ENCODE measurements at regions of chr11 and their contacts with region 1.

Region 1: DNA sequence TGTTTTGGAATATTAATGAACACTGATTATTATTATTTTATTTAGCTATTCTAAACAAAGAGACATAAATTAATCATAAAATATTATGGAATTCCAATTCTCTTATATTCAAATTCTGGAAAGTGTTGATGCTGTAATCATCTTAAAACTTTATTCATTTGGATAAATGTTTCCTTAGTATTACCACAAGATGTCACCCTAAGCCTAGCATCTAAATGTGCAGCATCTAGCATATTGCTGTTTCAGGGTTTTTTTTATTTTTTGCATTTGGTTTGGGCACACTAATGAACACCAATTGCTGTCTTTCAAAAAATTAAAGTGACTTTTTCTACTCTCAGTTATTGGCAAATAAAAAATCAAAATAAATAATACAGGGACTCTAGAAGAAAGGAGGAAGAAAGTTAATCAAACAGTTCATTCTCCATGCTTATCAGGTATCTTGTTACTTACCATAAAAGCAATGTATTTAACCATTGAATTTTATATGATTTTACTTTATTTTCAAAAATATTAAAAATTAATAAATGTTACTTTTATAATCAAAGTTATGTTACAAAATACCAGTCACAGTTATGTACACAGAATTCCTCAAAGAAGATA is 31.8 kb downstream of the DLG2 start:
- DNase-seq: peak; percentile 66
- H3K4me3 ChIP-seq: no peak overlapping the region
- H3K27ac ChIP-seq: no peak overlapping the region
- H3K4me1 ChIP-seq: no peaks in the 10 kb centered on the region
- CTCF ChIP-seq: peak; percentile 90

Region 2: DNA sequence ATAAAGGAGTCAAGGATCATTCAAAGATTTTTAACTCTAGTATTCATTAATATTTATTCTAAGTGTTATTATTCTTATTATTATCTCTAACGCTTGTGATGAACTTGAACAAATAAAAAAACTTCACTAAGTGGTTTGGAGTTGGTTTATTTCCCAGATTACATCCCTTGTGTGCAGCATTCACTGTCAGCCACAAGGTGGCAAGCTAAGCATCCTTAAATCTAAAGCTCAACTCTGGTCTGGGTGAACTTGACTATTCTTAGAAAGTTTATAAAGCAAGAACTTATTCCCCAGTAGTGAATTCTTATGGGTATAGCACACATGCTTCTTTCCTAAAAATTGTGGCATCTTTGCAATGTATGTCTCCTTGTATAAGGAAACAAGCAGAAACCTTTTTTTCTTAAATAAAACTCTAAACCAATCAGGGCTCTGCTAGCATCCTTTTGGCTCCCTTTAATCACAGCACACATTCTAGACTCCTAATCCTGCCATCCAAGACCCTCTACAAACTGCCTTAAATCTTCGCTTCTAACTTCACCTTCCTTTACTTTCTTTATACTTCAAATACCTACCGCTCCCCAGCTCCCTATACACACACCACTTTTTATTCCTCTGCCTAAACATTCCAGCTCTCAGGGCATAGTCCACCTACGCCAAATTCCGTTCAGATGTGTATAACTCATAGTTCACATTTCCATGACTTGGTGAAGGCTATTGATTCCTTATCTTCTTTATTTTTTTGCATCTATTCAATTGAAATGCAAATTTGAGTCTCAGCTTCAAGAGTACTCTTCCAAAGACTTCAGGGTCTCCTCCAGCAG is 1037.1 kb before region 1 on chr11:
- CTCF ChIA-PET with region 1: no interaction called
- POLR2A ChIA-PET with region 1: no interaction called
- intact Hi-C with region 1: loop called (anchors 2 kb)
- DNase-seq: peak; percentile 74
- H3K4me3 ChIP-seq: no peak overlapping the region
- H3K27ac ChIP-seq: no peak overlapping the region
- H3K4me1 ChIP-seq: no peaks in the 10 kb centered on the region
- CTCF ChIP-seq: peak; percentile 88

Region 3: GRCh38 chr11:84780689-84781293 is 814.6 kb before region 1 on chr11:
- CTCF ChIA-PET with region 1: no interaction called
- POLR2A ChIA-PET with region 1: no interaction called
- intact Hi-C with region 1: loop called (anchors 5 kb)
- DNase-seq: peak; percentile 31
- H3K4me3 ChIP-seq: no peak overlapping the region
- H3K27ac ChIP-seq: no peak overlapping the region
- H3K4me1 ChIP-seq: no peaks in the 10 kb centered on the region
- CTCF ChIP-seq: peak; percentile 77

Region 4: GRCh38 chr11:85123752-85124231 is 471.6 kb before region 1 on chr11:
- CTCF ChIA-PET with region 1: no interaction called
- POLR2A ChIA-PET with region 1: no interaction called
- intact Hi-C with region 1: no loop called
- DNase-seq: peak; percentile 31
- H3K4me3 ChIP-seq: peak overlapping the region; percentile 22
- H3K27ac ChIP-seq: peak overlapping the region; percentile 51
- H3K4me1 ChIP-seq: peaks cover 25% of the 10 kb centered on the region
- CTCF ChIP-seq: no peak

Region 5: DNA sequence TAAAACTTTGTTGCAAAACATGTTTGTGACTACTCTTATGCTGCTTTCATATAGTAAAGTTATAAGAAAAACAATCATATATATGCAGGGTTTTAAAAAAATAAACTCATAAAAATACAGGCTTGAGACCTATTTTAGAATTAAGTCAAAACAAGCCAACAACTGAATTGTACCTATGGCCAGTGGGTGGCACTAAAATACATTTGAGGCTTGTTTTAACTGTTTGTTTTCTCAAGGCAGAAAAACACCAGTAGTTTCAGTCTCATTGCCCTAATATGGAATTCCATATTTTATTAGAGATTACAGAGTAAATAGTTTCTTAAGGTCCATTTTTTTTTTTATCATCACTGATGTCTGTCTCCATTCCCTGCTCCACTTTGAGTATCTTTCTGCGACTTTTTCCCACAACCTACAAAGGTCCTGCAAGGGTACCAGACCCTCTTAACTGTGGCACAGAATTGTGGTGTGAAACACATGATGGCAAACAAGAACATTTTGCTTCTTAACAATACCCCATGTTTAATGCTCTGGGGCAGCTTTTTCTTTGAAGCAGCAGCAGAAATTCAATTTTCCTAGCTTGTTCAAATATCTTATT is 99.1 kb after region 1 on chr11:
- CTCF ChIA-PET with region 1: no interaction called
- POLR2A ChIA-PET with region 1: no interaction called
- intact Hi-C with region 1: no loop called
- DNase-seq: peak; percentile 24
- H3K4me3 ChIP-seq: no peak overlapping the region
- H3K27ac ChIP-seq: no peak overlapping the region
- H3K4me1 ChIP-seq: no peaks in the 10 kb centered on the region
- CTCF ChIP-seq: peak; percentile 80

Region 6: GRCh38 chr11:85826116-85826855 is 230.9 kb after region 1 on chr11:
- CTCF ChIA-PET with region 1: no interaction called
- POLR2A ChIA-PET with region 1: no interaction called
- intact Hi-C with region 1: loop called (anchors 10 kb)
- DNase-seq: peak; percentile 13
- H3K4me3 ChIP-seq: no peak overlapping the region
- H3K27ac ChIP-seq: no peak overlapping the region
- H3K4me1 ChIP-seq: no peaks in the 10 kb centered on the region
- CTCF ChIP-seq: peak; percentile 64

Measured in OCI-LY7 (cell line).